ENCODE measurements at regions of chr10 and their contacts with region 1.

Region 1: DNA sequence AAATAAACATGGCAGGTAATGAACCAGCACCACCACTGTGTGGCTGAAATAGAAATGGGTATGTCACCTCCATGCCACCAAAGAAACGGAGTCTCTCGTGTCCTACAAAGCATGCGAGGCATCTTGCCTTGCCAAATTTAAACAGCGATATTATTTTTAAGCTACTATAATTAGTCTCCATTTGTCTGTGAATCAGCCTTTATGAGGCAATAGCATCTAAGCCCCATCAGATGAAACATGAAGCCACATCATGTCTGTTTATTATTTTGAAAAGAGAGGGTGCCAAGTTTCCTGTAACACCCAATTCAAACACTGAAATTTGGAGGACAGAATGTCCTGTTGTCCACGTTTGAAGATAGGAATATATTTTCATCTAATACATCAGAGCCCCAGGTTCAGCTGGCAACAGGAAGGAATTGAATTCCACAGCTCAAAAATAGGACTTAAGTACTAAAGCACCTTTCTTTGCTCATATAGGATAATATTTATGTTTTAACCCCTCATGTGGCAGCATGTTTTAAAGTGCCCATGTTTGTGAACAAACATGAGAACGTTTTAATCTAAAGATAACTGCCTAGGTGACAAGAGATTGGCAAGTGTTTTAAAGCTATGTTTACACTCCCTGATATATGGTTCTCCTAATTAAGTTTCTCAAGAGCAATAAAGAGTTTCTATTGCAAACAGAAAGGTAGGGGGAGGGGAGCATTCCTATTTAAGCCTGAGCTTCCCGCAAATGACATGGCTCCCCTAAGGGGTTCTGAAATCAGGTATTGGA is 86.8 kb downstream of the SORBS1 start:
- DNase-seq: peak; percentile 71 to 78
- ATAC-seq: peak; percentile 77 to 78
- H3K4me3 ChIP-seq: no peak overlapping the region
- H3K27ac ChIP-seq: peak overlapping the region; percentile 92 to 99 (median 95)
- H3K4me1 ChIP-seq: peaks cover 87 to 95% of the 10 kb centered on the region in 2 donors
- H3K27me3 ChIP-seq: no peaks in the 10 kb centered on the region
- CTCF ChIP-seq: peak in 4 of 5 experiments; percentile 25 to 41 (median 35)
- POLR2A ChIP-seq: peak; percentile 21 to 70

Region 2: GRCh38 chr10:95279042-95279820 is 195.2 kb before region 1 on chr10:
- in situ Hi-C with region 1: no loop called
- intact Hi-C with region 1: loop called (anchors 5 kb)
- DNase-seq: no peak
- ATAC-seq: peak in 1 of 2 donors; percentile 30
- H3K4me3 ChIP-seq: peak overlapping the region in 1 of 4 donors; percentile 14
- H3K27ac ChIP-seq: peak overlapping the region; percentile 80 to 97 (median 92)
- H3K4me1 ChIP-seq: peaks cover 78 to 98% of the 10 kb centered on the region in 2 donors
- H3K27me3 ChIP-seq: no peaks in the 10 kb centered on the region
- CTCF ChIP-seq: no peak
- POLR2A ChIP-seq: no peak

Region 3: DNA sequence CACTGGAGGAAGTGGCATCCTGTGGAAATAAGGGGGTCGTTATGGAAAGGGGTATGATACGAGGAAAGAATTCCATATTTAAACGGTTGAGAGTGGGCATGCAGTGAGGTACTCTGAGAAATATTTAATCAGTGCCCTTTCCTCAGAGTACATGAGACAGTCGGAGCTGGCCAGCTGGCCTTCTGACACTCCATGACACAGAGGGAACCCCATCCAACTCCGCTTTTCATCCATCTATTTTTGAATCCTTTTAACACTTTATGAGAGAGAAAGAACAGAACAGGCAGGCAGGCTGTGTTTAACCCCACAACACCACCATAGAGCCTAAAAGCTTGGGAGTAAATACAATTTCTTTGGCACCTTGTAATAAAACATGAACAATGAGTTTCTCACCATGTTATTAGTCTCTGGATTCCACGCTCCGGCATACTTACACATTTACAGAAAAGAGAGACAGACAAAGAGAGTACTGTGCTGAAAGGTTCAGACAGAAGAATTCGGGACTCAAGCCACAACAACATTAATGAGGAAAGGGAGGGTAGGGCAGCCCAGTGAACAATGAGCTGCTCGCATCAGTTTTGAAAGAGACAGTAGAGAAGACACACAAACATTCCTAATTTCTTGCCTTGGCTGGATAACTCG is 59.5 kb before region 1 on chr10:
- in situ Hi-C with region 1: no loop called
- intact Hi-C with region 1: loop called (anchors 2 kb)
- DNase-seq: peak; percentile 67 to 80
- ATAC-seq: peak; percentile 75 to 84
- H3K4me3 ChIP-seq: peak overlapping the region; percentile 55 to 71 (median 62)
- H3K27ac ChIP-seq: peak overlapping the region; percentile 91 to 98 (median 97)
- H3K4me1 ChIP-seq: peaks cover 51 to 54% of the 10 kb centered on the region in 2 donors
- H3K27me3 ChIP-seq: no peaks in the 10 kb centered on the region
- CTCF ChIP-seq: no peak
- POLR2A ChIP-seq: peak; percentile 44 to 47

Region 4: GRCh38 chr10:95508730-95509129 is 34.3 kb after region 1 on chr10:
- in situ Hi-C with region 1: no loop called
- intact Hi-C with region 1: no loop called
- DNase-seq: no peak
- ATAC-seq: peak in 1 of 2 donors; percentile 7
- H3K4me3 ChIP-seq: peak overlapping the region in 3 of 4 donors; percentile 5 to 18 (median 6)
- H3K27ac ChIP-seq: peak overlapping the region; percentile 59 to 74 (median 62)
- H3K4me1 ChIP-seq: peaks cover 58 to 79% of the 10 kb centered on the region in 2 donors
- H3K27me3 ChIP-seq: no peaks in the 10 kb centered on the region
- CTCF ChIP-seq: no peak
- POLR2A ChIP-seq: no peak

Region 5: DNA sequence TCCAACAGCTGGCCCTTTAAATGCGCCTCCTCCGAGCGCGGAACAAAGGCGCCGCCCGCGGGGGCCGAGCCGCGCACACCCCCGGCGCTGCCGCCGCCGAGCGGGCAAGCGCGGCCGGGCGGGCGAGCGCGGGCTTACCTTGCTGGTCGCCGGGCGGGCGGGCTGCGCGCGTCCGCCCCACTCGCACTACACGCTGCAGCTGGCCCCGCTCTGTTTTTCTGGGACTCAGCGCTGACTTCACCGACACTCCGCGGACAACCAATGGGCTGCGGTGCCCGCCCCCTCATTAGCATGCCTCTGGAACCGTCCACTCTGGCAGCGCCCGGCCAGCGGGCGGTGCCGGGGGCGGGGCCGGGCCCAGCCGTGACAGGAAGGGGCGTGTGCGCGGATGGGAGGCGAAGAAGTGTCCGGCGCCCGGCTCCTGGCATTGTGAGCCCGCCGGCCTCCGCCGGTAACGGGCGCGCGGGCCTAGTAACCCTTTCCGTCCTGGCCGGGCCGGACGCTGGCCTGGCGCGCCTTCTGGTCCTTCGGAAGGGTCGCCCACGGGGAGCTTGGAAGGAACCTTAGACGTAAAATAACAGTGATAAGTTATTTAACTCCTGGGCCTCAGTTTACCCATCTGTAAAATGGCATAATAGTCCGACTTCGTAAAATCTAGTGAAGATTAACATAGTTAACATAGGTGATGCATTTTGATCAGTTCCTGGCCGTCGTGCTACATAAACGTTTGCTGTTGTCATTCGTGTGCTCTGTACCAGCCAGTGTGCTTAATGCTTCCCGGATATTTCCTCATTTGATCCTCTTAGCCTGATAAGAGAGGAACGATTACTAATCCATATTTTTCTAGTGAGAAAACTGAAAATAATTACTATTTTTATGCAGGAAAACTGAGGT is 87.0 kb after region 1 on chr10 and contains the start of gene SORBS1:
- in situ Hi-C with region 1: no loop called
- intact Hi-C with region 1: loop called (anchors 2 kb)
- DNase-seq: peak; percentile 97 to 98
- ATAC-seq: peak; percentile 95 to 98
- H3K4me3 ChIP-seq: peak within 1 kb of the TSS; percentile 86 to 98 (median 88)
- H3K27ac ChIP-seq: peak within 1 kb of the TSS; percentile 84 to 96 (median 91)
- H3K4me1 ChIP-seq: peaks cover 23 to 41% of the 10 kb centered on the region in 2 donors
- H3K27me3 ChIP-seq: no peaks in the 10 kb centered on the region
- CTCF ChIP-seq: peak in 1 of 5 experiments; percentile 13
- POLR2A ChIP-seq: peak; percentile 98 to 100
- total RNA-seq, gene SORBS1: 146 to 331 (median 186) TPM